ENCODE measurements at regions of chr6 and their contacts with region 1.

Region 1: GRCh38 chr6:82178077-82178758 is 69.3 kb downstream of the IBTK start:
- DNase-seq: no peak
- H3K4me3 ChIP-seq: no peak overlapping the region
- H3K27ac ChIP-seq: no peak overlapping the region
- H3K4me1 ChIP-seq: peaks cover 0 to 7% (median 0%) of the 10 kb centered on the region in 4 donors
- H3K27me3 ChIP-seq: no peaks in the 10 kb centered on the region
- CTCF ChIP-seq: peak; percentile 54 to 75

Region 2: GRCh38 chr6:80605165-80605989 is 1572.8 kb before region 1 on chr6:
- intact Hi-C with region 1: loop called (anchors 10 kb)
- DNase-seq: no peak
- H3K4me3 ChIP-seq: no peak overlapping the region
- H3K27ac ChIP-seq: no peak overlapping the region
- H3K4me1 ChIP-seq: peaks cover 0 to 33% (median 18%) of the 10 kb centered on the region in 4 donors
- H3K27me3 ChIP-seq: no peaks in the 10 kb centered on the region
- CTCF ChIP-seq: peak; percentile 54 to 56

Measured in tibial artery (tissue), 4 donors.